Breast epithelium (tissue), 4 donors: ENCODE measurements at regions of chr14 and their contacts with region 1.

Region 1: DNA sequence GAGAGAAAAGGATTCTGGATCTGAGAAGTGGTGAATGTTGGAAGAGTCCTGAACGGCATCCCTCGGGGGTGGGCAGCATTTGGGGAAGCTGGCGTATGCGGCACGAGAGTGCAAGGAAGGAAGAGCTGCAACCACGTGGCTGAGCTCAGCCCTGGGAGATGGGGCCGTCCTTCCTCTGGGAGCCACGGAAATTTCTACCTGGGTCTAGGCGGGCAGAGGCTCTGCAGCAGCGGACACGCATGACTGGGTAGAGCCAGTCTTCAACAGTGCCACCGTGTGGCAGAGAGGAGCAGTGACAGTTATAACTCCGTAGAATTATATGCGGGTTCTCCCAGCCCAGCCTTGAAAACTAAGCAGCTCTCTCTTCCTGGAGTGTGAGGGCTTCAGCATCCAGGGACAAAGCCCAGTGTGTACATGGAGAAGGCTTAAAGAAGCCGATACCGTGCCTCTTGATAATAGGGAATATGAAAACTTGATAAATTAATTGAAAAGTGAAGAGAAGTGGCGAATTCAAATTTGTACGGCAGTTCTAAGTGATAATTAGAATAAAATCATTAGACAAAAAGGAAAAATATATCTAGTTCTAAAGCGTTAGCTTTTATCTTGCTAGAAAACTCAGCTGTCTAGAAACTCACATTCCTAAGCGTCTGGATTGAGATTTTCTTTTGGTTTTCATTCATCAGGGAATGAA is 82.9 kb upstream of the STXBP6 start:
- DNase-seq: peak; percentile 22 to 55
- H3K4me3 ChIP-seq: no peak overlapping the region
- H3K27ac ChIP-seq: no peak overlapping the region
- H3K4me1 ChIP-seq: no peaks in the 10 kb centered on the region
- H3K27me3 ChIP-seq: peaks cover 0 to 10% of the 10 kb centered on the region in 2 donors
- CTCF ChIP-seq: peak; percentile 57 to 75 (median 69)
- POLR2A ChIP-seq: no peak

Region 2: GRCh38 chr14:24851837-24852236 is 281.0 kb before region 1 on chr14:
- intact Hi-C with region 1: loop called (anchors 5 kb)
- DNase-seq: no peak
- H3K4me3 ChIP-seq: no peak overlapping the region
- H3K27ac ChIP-seq: no peak overlapping the region
- H3K4me1 ChIP-seq: no peaks in the 10 kb centered on the region
- H3K27me3 ChIP-seq: no peaks in the 10 kb centered on the region
- CTCF ChIP-seq: no peak
- POLR2A ChIP-seq: no peak

Region 3: DNA sequence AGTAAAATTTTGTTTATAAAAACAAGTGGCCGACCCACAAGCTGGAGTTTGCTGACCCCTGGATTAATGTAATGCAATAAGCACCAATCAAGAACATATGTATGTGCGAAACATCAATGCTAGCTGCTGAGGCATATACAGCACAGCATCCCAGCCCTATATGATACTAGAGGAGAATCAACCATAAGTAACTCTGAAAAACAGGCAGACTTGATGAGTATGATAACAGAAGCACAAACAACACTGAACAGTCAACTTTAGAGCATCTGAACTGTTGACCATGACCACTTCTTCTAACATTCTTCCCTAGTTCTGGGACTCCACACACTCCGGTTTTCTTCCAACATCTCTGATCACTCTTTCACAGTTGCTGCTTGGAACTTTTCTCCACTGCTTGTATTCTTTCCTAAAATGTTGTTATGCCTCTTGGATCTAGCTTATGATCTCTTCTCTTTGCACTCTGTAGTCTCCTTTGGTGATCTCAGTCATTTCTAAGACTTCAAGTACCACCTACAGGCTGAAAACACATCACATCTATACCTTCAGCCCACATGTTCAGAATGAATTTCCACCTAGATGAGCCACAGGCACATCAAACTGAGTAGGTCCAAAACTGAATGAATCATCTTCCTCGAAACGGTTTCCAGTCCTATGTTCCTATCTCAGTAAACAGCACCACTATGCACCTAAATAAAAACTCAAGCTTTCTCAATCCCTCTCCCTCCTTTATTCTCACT is 140.1 kb before region 1 on chr14:
- intact Hi-C with region 1: no loop called
- DNase-seq: no peak
- H3K4me3 ChIP-seq: no peak overlapping the region
- H3K27ac ChIP-seq: no peak overlapping the region
- H3K4me1 ChIP-seq: no peaks in the 10 kb centered on the region
- H3K27me3 ChIP-seq: no peaks in the 10 kb centered on the region
- CTCF ChIP-seq: no peak
- POLR2A ChIP-seq: no peak